ENCODE measurements at regions of chr5 and their contacts with region 1.

Region 1: GRCh38 chr5:56270568-56271392 is 37.6 kb upstream of the ANKRD55 start:
- DNase-seq: peak; percentile 65 to 74 (median 72)
- H3K4me3 ChIP-seq: no peak overlapping the region
- H3K4me3 Mint-ChIP-seq: peak overlapping the region; percentile 51 to 86 (median 74)
- H3K27ac ChIP-seq: no peak overlapping the region
- H3K27ac Mint-ChIP-seq: peak overlapping the region; percentile 30 to 84 (median 50)
- H3K4me1 ChIP-seq: peaks cover 13% of the 10 kb centered on the region
- H3K4me1 Mint-ChIP-seq: peaks cover 11 to 21% (median 13%) of the 10 kb centered on the region in 4 donors
- H3K27me3 ChIP-seq: no peaks in the 10 kb centered on the region
- H3K27me3 Mint-ChIP-seq: no peaks in the 10 kb centered on the region

Region 2: DNA sequence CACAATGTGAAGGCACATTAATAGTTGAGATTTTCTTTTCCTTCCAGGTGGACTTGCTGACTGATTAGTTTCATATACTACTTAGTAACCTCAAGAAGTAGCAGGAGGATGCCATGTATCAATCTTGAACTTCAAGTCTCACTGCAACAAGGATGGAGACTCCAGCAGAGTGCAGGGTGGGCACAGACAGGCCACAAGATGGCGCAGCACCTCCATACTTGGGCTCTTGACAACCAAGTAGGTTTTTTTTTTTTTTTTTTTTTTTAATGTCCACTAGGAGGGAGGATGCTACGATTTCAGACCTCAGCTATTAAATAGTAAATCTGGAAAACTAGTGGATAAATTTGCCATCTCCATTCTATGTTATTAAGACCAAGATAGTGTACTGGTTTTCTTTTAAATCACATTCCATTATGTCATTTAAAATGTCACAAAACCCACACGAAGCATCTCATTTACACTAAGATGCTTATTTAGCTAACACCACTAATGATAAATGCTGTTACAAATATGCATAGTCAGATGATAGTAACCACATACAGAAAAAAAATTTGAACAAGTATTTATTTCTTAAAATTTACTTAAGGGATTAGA is 334.6 kb before region 1 on chr5:
- CTCF ChIA-PET with region 1: interaction called, 11 read pairs
- POLR2A ChIA-PET with region 1: no interaction called
- intact Hi-C with region 1: loop called (anchors 1 kb)
- DNase-seq: peak; percentile 61 to 76 (median 65)
- H3K4me3 ChIP-seq: no peak overlapping the region
- H3K4me3 Mint-ChIP-seq: no peak overlapping the region
- H3K27ac ChIP-seq: no peak overlapping the region
- H3K27ac Mint-ChIP-seq: peak overlapping the region in 4 of 7 donors; percentile 25 to 73 (median 42)
- H3K4me1 ChIP-seq: peaks cover 5% of the 10 kb centered on the region
- H3K4me1 Mint-ChIP-seq: peaks cover 0 to 8% (median 4%) of the 10 kb centered on the region in 4 donors
- H3K27me3 ChIP-seq: no peaks in the 10 kb centered on the region
- H3K27me3 Mint-ChIP-seq: no peaks in the 10 kb centered on the region

Region 3: DNA sequence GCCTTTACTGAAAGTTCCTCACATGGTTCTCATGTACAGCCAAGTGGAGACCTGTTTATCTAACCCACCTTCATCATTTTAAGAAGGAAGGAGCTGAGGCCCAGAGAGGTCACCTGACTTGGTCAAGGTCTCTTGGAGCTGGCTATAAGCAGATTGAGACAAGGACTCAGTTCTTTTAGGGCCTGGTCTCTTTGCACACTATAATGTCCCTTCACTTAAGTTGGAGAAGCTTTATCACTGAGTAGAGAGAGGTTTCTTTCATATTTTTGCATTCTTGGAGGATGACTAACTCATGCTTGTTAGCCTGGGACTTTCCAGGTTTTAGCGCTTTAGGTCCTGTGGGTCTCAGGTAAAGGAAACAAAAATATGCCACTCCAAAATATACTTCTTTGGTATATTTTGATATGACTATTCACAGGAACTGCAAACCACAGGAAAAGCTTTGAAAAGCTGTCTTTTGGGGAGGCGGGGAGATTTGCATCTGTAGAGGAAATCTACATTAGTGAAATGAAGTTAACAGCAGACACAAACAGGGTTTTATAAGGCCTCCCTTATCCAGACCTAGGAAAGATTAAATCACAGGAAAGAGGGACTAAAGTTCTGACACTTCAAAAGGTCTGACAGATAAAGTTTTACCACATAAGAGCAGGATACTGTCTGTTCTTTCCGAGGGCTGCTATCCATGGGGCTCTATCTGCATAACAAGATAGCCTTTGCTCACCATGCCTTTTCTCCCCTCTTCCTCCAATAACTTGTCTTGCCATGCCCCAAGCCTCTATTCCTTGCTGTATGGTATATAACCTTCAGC is 58.2 kb after region 1 on chr5:
- CTCF ChIA-PET with region 1: interaction called, 7 read pairs
- POLR2A ChIA-PET with region 1: interaction called, 4 read pairs
- intact Hi-C with region 1: loop called (anchors 2 kb)
- DNase-seq: peak; percentile 50 to 82 (median 73)
- H3K4me3 ChIP-seq: no peak overlapping the region
- H3K4me3 Mint-ChIP-seq: peak overlapping the region; percentile 47 to 80 (median 61)
- H3K27ac ChIP-seq: peak overlapping the region; percentile 67
- H3K27ac Mint-ChIP-seq: peak overlapping the region; percentile 58 to 91 (median 76)
- H3K4me1 ChIP-seq: peaks cover 59% of the 10 kb centered on the region
- H3K4me1 Mint-ChIP-seq: peaks cover 45 to 69% (median 59%) of the 10 kb centered on the region in 4 donors
- H3K27me3 ChIP-seq: no peaks in the 10 kb centered on the region
- H3K27me3 Mint-ChIP-seq: no peaks in the 10 kb centered on the region

Region 4: GRCh38 chr5:56588636-56589480 is 318.1 kb after region 1 on chr5:
- CTCF ChIA-PET with region 1: interaction called, 10 read pairs
- POLR2A ChIA-PET with region 1: no interaction called
- intact Hi-C with region 1: loop called (anchors 10 kb)
- DNase-seq: peak; percentile 73 to 88 (median 82)
- H3K4me3 ChIP-seq: no peak overlapping the region
- H3K4me3 Mint-ChIP-seq: peak overlapping the region; percentile 49 to 81 (median 68)
- H3K27ac ChIP-seq: peak overlapping the region; percentile 72
- H3K27ac Mint-ChIP-seq: peak overlapping the region; percentile 91 to 98 (median 95)
- H3K4me1 ChIP-seq: peaks cover 52% of the 10 kb centered on the region
- H3K4me1 Mint-ChIP-seq: peaks cover 52 to 74% (median 61%) of the 10 kb centered on the region in 4 donors
- H3K27me3 ChIP-seq: no peaks in the 10 kb centered on the region
- H3K27me3 Mint-ChIP-seq: no peaks in the 10 kb centered on the region

Region 5: GRCh38 chr5:56827049-56827448 is 556.3 kb after region 1 on chr5:
- CTCF ChIA-PET with region 1: interaction called, 19 read pairs
- POLR2A ChIA-PET with region 1: interaction called, 5 read pairs
- intact Hi-C with region 1: no loop called
- DNase-seq: peak in 1 of 5 donors; percentile 40
- H3K4me3 ChIP-seq: no peak overlapping the region
- H3K4me3 Mint-ChIP-seq: peak overlapping the region; percentile 67 to 86 (median 74)
- H3K27ac ChIP-seq: peak overlapping the region; percentile 53
- H3K27ac Mint-ChIP-seq: peak overlapping the region; percentile 86 to 95 (median 88)
- H3K4me1 ChIP-seq: peaks cover 98% of the 10 kb centered on the region
- H3K4me1 Mint-ChIP-seq: peaks cover 75 to 98% (median 88%) of the 10 kb centered on the region in 4 donors
- H3K27me3 ChIP-seq: no peaks in the 10 kb centered on the region
- H3K27me3 Mint-ChIP-seq: no peaks in the 10 kb centered on the region

Region 6: GRCh38 chr5:56862909-56863308 is 592.1 kb after region 1 on chr5:
- CTCF ChIA-PET with region 1: interaction called, 18 read pairs
- POLR2A ChIA-PET with region 1: interaction called, 10 read pairs
- intact Hi-C with region 1: no loop called
- DNase-seq: peak in 2 of 5 donors; percentile 9 to 18
- H3K4me3 ChIP-seq: no peak overlapping the region
- H3K4me3 Mint-ChIP-seq: no peak overlapping the region
- H3K27ac ChIP-seq: no peak overlapping the region
- H3K27ac Mint-ChIP-seq: peak overlapping the region in 1 of 7 donors; percentile 20
- H3K4me1 ChIP-seq: peaks cover 9% of the 10 kb centered on the region
- H3K4me1 Mint-ChIP-seq: peaks cover 13 to 32% (median 23%) of the 10 kb centered on the region in 4 donors
- H3K27me3 ChIP-seq: no peaks in the 10 kb centered on the region
- H3K27me3 Mint-ChIP-seq: no peaks in the 10 kb centered on the region

Region 7: DNA sequence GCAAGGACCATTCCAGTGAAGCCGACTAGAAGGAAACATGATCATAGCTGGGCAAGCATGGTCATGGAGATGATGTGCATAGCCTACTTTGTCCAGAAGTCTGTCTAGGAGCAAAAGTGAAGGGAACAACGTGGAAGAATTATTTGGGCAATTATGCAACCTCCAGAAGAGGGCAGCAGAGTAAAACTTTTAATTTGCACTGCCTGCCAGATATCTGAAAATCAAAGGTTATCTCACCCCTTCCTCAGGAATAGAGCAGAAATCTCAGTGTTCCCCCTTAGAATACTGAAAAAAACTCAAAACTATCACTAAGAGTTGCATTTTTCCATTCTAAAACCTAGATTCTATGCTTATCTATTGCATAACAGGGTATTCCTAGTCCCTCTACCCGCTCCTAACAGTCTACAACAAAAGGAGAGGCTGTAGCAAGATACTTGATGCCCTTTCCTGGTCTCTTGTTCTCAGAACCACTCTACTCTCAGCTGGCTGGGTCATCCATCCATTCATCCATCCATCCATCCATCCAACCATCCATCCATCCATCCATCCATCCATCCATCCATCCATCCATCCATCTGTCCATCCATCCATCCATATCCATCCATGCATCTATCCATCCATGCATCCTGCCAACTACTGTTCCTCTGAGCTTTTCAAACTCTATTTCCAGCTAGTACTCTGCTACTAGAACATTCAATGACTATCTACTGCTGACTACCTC is 630.2 kb after region 1 on chr5:
- CTCF ChIA-PET with region 1: interaction called, 38 read pairs
- POLR2A ChIA-PET with region 1: interaction called, 3 read pairs
- intact Hi-C with region 1: loop called (anchors 1 kb)
- DNase-seq: peak in 4 of 5 donors; percentile 43 to 64 (median 54)
- H3K4me3 ChIP-seq: no peak overlapping the region
- H3K4me3 Mint-ChIP-seq: no peak overlapping the region
- H3K27ac ChIP-seq: no peak overlapping the region
- H3K27ac Mint-ChIP-seq: no peak overlapping the region
- H3K4me1 ChIP-seq: no peaks in the 10 kb centered on the region
- H3K4me1 Mint-ChIP-seq: peaks cover 2 to 6% (median 4%) of the 10 kb centered on the region in 4 donors
- H3K27me3 ChIP-seq: no peaks in the 10 kb centered on the region
- H3K27me3 Mint-ChIP-seq: no peaks in the 10 kb centered on the region

Measured in CD4-positive, alpha-beta memory T cell (primary cell).